ENCODE measurements at regions of chr10 and their contacts with region 1.

Region 1: DNA sequence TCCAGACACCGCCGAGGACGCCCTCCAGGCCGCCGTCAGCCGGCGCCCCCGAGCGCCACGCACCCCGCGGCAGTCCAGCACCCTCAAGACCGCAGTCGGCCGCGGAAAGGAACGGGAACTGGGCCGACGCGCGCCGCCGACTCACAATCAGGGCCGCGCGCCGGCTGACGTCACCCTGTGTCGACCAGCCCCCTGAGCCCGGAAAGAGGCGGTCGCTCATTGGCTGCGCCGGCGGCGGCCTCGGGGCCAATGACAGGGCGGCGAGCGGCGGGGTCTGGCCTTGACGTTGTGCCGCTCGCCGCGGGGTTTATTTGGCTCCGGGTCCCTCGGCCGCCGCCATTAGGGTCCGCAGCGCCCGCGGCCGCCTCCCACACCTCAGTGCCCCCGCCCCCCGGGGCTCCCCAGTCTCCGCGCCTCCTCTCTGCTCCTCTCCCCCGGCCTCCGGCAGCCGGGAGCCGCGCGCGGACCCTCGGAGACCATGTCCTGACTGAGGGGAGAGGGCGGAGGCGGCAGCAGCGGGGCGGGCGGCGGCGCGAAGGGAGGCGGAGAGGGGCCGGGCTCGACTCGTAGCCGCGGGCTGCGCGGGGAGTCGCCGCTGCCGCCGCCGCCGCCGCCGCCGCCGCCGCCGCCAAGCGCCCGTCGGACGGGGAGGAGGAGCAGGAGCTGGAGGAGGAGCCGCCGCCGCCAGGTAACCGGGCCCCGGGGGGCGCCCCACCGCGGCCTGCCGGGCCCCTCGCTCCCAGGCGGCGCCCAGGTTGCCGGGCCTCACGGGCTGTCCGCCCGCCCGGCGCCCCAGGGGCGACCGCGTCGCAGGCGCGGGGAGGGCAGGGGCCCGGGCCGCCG is 25.1 kb upstream of the ZRANB1 start:
- DNase-seq: peak; percentile 66
- ATAC-seq: peak; percentile 97
- H3K4me3 ChIP-seq: peak overlapping the region; percentile 100
- H3K27ac ChIP-seq: peak overlapping the region; percentile 88
- H3K4me1 ChIP-seq: no peaks in the 10 kb centered on the region; the same call in 1 of the 2 replicates
- H3K27me3 ChIP-seq: no peaks in the 10 kb centered on the region
- CTCF ChIP-seq: no peak
- EP300 ChIP-seq: no peak
- POLR2A ChIP-seq: peak; percentile 93
- RAD21 ChIP-seq: no peak

Region 2: GRCh38 chr10:124748166-124748565 is 168.6 kb before region 1 on chr10:
- CTCF ChIA-PET with region 1: no interaction called
- POLR2A ChIA-PET with region 1: no interaction called
- RAD21 ChIA-PET with region 1: interaction called, 3 read pairs
- SMC1A ChIA-PET with region 1: interaction called, 5 read pairs
- in situ Hi-C with region 1: no loop called
- intact Hi-C with region 1: loop called (anchors 2 kb)
- DNase-seq: no peak
- ATAC-seq: no peak
- H3K4me3 ChIP-seq: no peak overlapping the region
- H3K27ac ChIP-seq: no peak overlapping the region
- H3K4me1 ChIP-seq: peaks cover 4% of the 10 kb centered on the region; the same call in 1 of the 2 replicates
- H3K27me3 ChIP-seq: no peaks in the 10 kb centered on the region
- CTCF ChIP-seq: no peak
- EP300 ChIP-seq: no peak
- POLR2A ChIP-seq: no peak
- RAD21 ChIP-seq: no peak

Region 3: GRCh38 chr10:124842721-124843120 is 74.1 kb before region 1 on chr10:
- CTCF ChIA-PET with region 1: no interaction called
- POLR2A ChIA-PET with region 1: no interaction called
- RAD21 ChIA-PET with region 1: no interaction called
- SMC1A ChIA-PET with region 1: no interaction called
- in situ Hi-C with region 1: no loop called
- intact Hi-C with region 1: no loop called
- DNase-seq: no peak
- ATAC-seq: no peak
- H3K4me3 ChIP-seq: no peak overlapping the region
- H3K27ac ChIP-seq: no peak overlapping the region
- H3K4me1 ChIP-seq: no peaks in the 10 kb centered on the region
- H3K27me3 ChIP-seq: no peaks in the 10 kb centered on the region
- CTCF ChIP-seq: no peak
- EP300 ChIP-seq: no peak
- POLR2A ChIP-seq: no peak
- RAD21 ChIP-seq: no peak

Region 4: GRCh38 chr10:124957409-124957947 is 40.7 kb after region 1 on chr10:
- CTCF ChIA-PET with region 1: no interaction called
- POLR2A ChIA-PET with region 1: no interaction called
- RAD21 ChIA-PET with region 1: no interaction called
- SMC1A ChIA-PET with region 1: no interaction called
- in situ Hi-C with region 1: no loop called
- intact Hi-C with region 1: loop called (anchors 5 kb)
- DNase-seq: no peak
- ATAC-seq: no peak
- H3K4me3 ChIP-seq: no peak overlapping the region
- H3K27ac ChIP-seq: no peak overlapping the region
- H3K4me1 ChIP-seq: peaks cover 17% of the 10 kb centered on the region
- H3K27me3 ChIP-seq: no peaks in the 10 kb centered on the region
- CTCF ChIP-seq: no peak
- EP300 ChIP-seq: no peak
- POLR2A ChIP-seq: no peak
- RAD21 ChIP-seq: no peak